ENCODE measurements at regions of chr6 and their contacts with region 1.

Region 1: GRCh38 chr6:16514249-16514648 is 247.0 kb downstream of the ATXN1 start:
- DNase-seq: peak; percentile 37
- ATAC-seq: peak; percentile 43
- H3K4me3 Mint-ChIP-seq: no peak overlapping the region
- H3K27ac Mint-ChIP-seq: no peak overlapping the region
- H3K4me1 Mint-ChIP-seq: peaks cover 69% of the 10 kb centered on the region
- H3K27me3 Mint-ChIP-seq: no peaks in the 10 kb centered on the region

Region 2: GRCh38 chr6:16332175-16332542 is 182.1 kb before region 1 on chr6:
- CTCF ChIA-PET with region 1: interaction called, 27 read pairs
- POLR2A ChIA-PET with region 1: no interaction called
- intact Hi-C with region 1: loop called (anchors 1 to 5 kb)
- DNase-seq: peak; percentile 91
- ATAC-seq: peak; percentile 98
- H3K4me3 Mint-ChIP-seq: no peak overlapping the region
- H3K27ac Mint-ChIP-seq: no peak overlapping the region
- H3K4me1 Mint-ChIP-seq: no peaks in the 10 kb centered on the region
- H3K27me3 Mint-ChIP-seq: no peaks in the 10 kb centered on the region

Region 3: GRCh38 chr6:16391451-16391912 is 122.8 kb before region 1 on chr6:
- CTCF ChIA-PET with region 1: no interaction called
- POLR2A ChIA-PET with region 1: no interaction called
- intact Hi-C with region 1: no loop called
- DNase-seq: no peak
- ATAC-seq: no peak
- H3K4me3 Mint-ChIP-seq: no peak overlapping the region
- H3K27ac Mint-ChIP-seq: no peak overlapping the region
- H3K4me1 Mint-ChIP-seq: peaks cover 5% of the 10 kb centered on the region
- H3K27me3 Mint-ChIP-seq: no peaks in the 10 kb centered on the region

Region 4: DNA sequence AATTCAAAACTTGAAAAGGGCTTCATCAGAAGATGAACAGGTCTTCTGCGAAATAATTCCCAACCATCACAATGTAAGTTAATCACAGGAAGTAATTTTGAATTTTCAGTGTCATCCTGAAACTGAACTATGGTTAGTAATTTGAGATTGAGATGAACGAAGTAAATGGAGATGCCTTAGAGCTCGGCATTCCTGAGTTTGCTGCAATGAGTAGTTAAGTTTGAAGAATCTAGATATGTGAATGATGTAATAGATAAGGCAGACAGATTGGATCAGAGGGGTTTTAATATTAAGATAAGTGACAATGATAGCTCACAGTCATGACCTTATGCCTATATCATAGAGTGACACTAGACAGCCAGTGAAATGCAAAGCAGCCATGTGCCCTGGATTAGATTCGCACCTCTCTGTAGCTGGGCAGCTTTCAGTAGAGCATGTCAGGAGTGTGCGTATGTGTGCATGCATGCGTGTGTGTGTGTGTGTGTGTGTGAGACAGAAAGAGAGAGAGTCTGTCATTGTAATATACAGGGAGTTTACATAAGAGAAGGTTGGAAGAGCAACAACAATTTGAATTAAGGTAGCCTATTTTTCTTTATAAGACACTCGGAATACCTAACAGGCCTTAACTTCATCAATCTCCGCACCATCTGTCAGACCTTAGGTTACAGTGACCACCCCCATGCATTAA is 42.9 kb before region 1 on chr6:
- CTCF ChIA-PET with region 1: interaction called, 7 read pairs
- POLR2A ChIA-PET with region 1: interaction called, 3 read pairs
- intact Hi-C with region 1: loop called (anchors 2 to 5 kb)
- DNase-seq: peak; percentile 36
- ATAC-seq: peak; percentile 45
- H3K4me3 Mint-ChIP-seq: no peak overlapping the region
- H3K27ac Mint-ChIP-seq: peak overlapping the region; percentile 60
- H3K4me1 Mint-ChIP-seq: peaks cover 79% of the 10 kb centered on the region
- H3K27me3 Mint-ChIP-seq: no peaks in the 10 kb centered on the region

Region 5: DNA sequence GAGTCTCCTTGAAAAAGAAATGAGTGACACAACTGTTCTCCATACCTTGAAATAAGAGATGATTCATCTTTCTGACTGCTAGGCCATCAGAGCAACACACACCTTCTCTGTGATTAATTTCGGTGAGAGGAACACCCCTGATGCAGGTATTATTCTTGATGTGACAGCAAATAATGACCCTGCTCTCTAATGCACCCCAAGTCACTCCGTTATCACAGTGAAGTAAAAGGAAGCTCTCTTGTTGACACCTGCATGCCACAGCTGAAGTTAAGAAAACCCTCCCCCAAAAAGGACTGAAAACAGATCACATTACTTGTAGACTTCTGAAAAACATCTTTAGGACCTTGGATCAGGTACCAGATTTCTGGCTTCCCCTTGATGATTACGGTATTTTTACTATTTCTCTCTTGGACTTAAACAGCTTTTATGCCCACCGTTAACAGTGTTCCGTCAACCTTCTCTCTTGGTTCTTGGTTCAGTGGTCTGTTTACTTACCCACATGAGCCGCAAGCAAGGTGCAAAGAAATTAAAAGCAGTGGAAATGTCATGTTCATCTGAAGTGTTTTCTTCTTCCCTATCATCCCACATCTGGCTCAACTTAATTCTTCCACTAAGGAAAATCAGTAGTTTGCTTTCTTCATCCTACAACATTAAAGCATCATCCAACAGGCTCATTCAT is 26.1 kb before region 1 on chr6:
- CTCF ChIA-PET with region 1: interaction called, 12 read pairs
- POLR2A ChIA-PET with region 1: no interaction called
- intact Hi-C with region 1: no loop called
- DNase-seq: no peak
- ATAC-seq: peak; percentile 50
- H3K4me3 Mint-ChIP-seq: no peak overlapping the region
- H3K27ac Mint-ChIP-seq: peak overlapping the region; percentile 80
- H3K4me1 Mint-ChIP-seq: peaks cover 75% of the 10 kb centered on the region
- H3K27me3 Mint-ChIP-seq: no peaks in the 10 kb centered on the region

Region 6: GRCh38 chr6:16684896-16685554 is 170.8 kb after region 1 on chr6:
- CTCF ChIA-PET with region 1: interaction called, 4 read pairs
- POLR2A ChIA-PET with region 1: no interaction called
- intact Hi-C with region 1: loop called in 1 of 2 experiments (anchors 5 kb)
- DNase-seq: peak; percentile 95
- ATAC-seq: peak; percentile 76
- H3K4me3 Mint-ChIP-seq: peak overlapping the region; percentile 43
- H3K27ac Mint-ChIP-seq: peak overlapping the region; percentile 78
- H3K4me1 Mint-ChIP-seq: peaks cover 86% of the 10 kb centered on the region
- H3K27me3 Mint-ChIP-seq: no peaks in the 10 kb centered on the region

Region 7: GRCh38 chr6:16964553-16965501 is 450.6 kb after region 1 on chr6:
- CTCF ChIA-PET with region 1: interaction called, 3 read pairs
- POLR2A ChIA-PET with region 1: no interaction called
- intact Hi-C with region 1: loop called in 1 of 2 experiments (anchors 5 kb)
- DNase-seq: peak; percentile 84
- ATAC-seq: peak; percentile 97
- H3K4me3 Mint-ChIP-seq: no peak overlapping the region
- H3K27ac Mint-ChIP-seq: no peak overlapping the region
- H3K4me1 Mint-ChIP-seq: peaks cover 15% of the 10 kb centered on the region
- H3K27me3 Mint-ChIP-seq: peaks cover 17% of the 10 kb centered on the region

Measured in activated CD4-positive, alpha-beta T cell treated with anti-CD3 and anti-CD28 coated beads for 36 hours (primary cell).